H1 (cell line): ENCODE measurements at regions of chr7 and their contacts with region 1.

Region 1: DNA sequence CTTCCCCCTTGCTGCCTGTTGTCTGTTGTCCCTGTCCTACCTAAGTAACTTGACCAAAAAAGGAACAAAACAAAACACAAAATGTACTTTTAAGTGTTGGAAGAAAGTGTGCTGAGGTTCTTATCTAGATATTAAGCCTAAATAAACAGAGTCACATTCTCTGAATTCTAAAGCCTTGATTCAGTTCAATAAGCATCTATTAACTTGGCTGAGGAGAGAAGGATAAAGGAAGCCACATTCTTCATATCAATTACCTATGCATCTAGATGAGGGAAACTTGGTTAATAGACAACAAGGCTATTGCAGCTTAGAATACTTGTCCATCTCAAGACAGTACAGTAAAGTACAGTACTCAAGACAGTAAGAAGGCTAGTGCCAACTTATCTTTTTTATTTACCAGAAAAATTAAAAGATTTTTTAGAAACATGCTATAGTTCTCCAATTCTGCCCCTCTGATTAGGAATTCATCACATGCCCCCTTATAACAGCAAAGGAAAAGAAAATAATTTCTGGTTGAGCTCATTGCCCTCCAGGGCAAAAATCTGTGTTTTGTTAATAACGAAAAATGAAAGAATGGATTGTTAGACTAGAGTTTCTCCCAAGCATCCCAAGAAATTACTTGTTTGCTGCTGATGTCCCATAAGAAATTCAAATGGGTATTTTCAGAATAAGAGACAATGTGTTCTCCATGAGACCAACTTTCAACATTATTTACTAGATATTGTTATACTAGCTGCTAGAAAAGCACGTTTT is 546.5 kb upstream of the SEMA3D start:
- DNase-seq: no peak
- H3K4me3 ChIP-seq: no peak overlapping the region
- H3K27ac ChIP-seq: no peak overlapping the region
- H3K4me1 ChIP-seq: no peaks in the 10 kb centered on the region
- H3K27me3 ChIP-seq: no peaks in the 10 kb centered on the region
- CTCF ChIP-seq: no peak
- EP300 ChIP-seq: no peak
- POLR2A ChIP-seq: no peak
- RAD21 ChIP-seq: no peak

Region 2: DNA sequence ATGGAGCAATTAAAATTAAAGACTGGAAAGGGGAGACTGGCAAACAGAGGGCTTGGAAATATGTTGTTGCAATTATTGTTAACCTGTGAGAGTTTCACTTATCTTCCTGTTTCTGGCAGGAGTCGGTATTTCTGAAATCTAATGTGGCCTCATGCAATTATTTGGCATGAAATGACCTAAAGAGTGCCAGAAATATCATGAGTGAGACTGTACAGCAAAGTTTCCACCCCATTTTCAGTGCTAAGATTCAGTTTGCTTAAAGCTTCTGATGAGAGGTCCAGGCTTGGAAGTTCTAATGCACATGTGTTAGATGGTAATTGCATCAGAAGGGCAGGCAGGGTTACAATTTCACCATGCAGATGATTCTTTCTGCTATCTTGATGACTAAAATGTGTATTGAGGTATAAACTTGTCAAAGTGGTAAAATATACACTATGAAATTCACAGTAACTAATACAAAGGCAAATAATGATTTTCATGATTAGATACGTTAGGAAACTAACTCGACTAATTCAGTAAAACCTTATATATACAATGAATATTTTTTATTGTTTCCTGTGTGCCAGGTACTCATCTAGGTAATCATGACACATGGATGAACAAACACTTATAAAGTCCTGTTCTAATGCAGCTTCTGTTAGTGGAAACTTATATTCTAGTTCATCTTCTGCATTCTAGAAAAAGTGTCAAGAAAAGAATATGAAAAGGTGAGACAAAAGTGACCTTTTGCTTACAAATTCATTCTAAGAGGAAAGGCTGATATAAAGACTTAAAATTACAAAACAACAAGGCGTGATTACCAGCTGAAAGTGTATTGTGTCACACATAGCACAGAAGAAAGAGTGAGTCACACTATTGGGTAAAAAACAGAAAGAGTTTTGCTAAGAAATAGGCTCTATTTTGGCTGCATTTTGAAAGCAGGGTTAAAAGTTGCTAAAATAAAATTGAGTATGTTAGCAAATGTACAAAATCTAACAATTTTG is 13.1 kb before region 1 on chr7:
- CTCF ChIA-PET with region 1: no interaction called
- POLR2A ChIA-PET with region 1: no interaction called
- DNase-seq: no peak
- H3K4me3 ChIP-seq: no peak overlapping the region
- H3K27ac ChIP-seq: no peak overlapping the region
- H3K4me1 ChIP-seq: peaks cover 0 to 2% (median 0%) of the 10 kb centered on the region in 4 experiments; a peak in 1 of 7 replicates
- H3K27me3 ChIP-seq: no peaks in the 10 kb centered on the region
- CTCF ChIP-seq: no peak
- EP300 ChIP-seq: no peak
- POLR2A ChIP-seq: no peak
- RAD21 ChIP-seq: no peak

Region 3: DNA sequence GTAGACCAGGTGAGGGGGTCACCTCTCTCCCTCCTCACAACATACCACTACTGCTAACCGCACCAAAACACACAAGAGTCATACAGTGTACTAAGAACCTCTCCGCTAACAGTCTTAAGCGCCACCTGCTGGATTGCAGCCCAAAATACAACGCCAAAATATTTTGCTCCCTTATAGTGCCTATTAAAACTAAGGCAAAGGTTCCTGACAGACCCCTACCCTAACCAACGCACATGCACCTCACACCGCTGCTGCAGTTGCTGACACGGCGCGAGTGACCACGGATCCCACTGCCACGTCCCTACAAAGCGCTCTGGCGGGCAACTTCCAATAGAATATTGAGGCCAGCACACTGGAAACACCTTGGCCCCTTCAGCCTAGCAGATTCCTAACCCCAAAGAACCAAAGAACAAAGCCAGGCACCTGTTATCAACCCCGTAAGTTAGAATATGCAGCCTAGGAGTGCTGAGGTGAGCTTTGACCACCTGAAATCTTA is 17.2 kb after region 1 on chr7:
- CTCF ChIA-PET with region 1: interaction called, 15 read pairs
- POLR2A ChIA-PET with region 1: no interaction called
- DNase-seq: peak in 1 of 2 experiments; percentile 33
- H3K4me3 ChIP-seq: no peak overlapping the region; a peak in 1 of 8 replicates
- H3K27ac ChIP-seq: no peak overlapping the region
- H3K4me1 ChIP-seq: peaks cover 0 to 5% (median 2%) of the 10 kb centered on the region in 4 experiments; a peak in 3 of 7 replicates
- H3K27me3 ChIP-seq: no peaks in the 10 kb centered on the region; a peak in 2 of 7 replicates
- CTCF ChIP-seq: peak; percentile 11 to 84 (median 73)
- EP300 ChIP-seq: no peak
- POLR2A ChIP-seq: no peak
- RAD21 ChIP-seq: peak; percentile 81 to 84